Activated CD8-positive, alpha-beta memory T cell treated with anti-CD3 and anti-CD28 coated beads, Interleukin-2, amount 10 ng/mL, durations not matched to agents 7 days and 5 days (primary cell): ENCODE measurements at regions of chr1 and their contacts with region 1.

Region 1: DNA sequence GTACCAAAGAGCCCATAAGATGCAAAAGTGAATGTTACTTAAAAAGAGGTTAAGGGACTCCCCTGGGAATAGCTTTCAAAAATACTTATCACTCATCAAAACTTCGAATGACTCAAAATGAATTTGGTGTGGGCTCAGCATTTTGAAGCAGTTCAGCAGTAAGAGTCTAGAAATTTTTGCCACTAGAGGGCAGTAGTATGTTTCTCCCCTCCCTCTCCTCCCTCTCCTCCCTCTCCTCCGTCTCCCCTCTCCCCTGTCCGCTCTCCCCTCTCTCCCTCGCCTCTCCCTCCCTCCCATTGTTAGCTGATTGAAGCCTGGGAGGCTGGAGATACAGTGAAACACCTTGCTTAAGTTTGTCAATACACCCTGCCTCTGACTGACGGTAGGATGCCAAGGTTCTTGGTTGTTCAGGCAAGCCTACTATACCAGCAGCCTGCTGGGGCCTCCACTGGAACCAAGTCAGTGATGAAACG is 70.8 kb upstream of the TENT5C start:
- DNase-seq: peak; percentile 55
- ATAC-seq: peak; percentile 92
- H3K4me3 Mint-ChIP-seq: no peak overlapping the region
- H3K27ac Mint-ChIP-seq: no peak overlapping the region
- H3K4me1 Mint-ChIP-seq: peaks cover 5% of the 10 kb centered on the region
- H3K27me3 Mint-ChIP-seq: no peaks in the 10 kb centered on the region

Region 2: DNA sequence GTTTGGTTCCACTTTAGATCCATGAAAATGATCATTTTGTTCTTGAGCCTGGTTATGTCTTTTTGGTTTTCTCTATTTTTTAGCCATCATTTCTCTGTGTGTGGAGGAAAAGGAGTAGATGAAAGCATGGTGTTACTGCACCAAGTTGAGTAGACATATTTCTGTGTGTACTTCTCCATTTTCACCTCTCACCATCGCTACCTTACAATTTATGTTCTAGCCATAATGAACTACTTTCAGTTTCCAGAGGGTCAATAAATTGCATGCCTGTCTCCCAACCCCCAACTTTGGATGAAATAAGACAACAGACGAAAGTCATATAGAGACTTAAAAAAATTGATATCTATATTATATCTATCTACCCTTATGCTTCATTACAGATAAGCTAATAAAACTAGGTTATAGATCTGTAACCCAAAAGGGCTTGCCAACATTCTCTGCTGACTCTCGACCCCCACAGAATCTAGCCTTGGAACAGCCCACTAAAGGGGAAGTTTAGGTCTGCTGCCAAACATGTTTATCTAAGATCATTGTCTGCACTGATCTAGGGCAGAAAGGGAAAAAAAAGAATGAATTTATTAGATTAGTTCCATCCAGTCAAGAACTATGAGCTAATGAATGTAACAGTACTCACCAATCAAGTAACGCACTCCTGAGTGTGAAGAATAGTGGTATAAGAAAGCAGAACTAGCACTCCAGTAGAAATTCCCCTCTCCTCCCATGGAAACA is 175.3 kb before region 1 on chr1:
- CTCF ChIA-PET with region 1: no interaction called
- DNase-seq: no peak
- ATAC-seq: no peak
- H3K4me3 Mint-ChIP-seq: peak overlapping the region; percentile 27
- H3K27ac Mint-ChIP-seq: no peak overlapping the region
- H3K4me1 Mint-ChIP-seq: peaks cover 33% of the 10 kb centered on the region
- H3K27me3 Mint-ChIP-seq: no peaks in the 10 kb centered on the region

Region 3: DNA sequence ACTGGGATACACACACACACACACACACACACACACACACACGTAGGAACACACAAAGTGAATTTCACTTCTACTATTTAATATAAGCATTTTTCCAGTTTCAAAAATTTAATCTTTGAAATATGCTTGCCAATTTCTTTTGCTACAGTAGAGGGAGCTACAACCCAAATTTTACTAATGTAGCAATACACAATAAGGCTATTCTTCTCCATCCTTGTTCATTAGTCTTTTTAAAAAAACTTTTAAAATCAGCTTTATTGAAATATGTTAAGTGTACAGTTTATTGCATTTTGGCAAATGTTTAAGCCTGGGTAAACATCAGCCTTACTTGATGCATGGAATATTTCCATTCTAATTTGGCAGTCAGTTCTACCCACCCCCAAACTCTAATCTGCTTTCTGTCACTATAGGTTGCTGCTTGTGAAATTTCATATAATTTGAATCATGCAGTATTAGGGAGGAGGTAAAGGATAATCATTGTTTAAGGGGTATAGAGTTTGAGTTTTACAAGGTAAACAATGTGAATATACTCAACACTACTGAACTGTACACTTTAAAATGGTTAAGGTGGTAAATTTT is 22.2 kb before region 1 on chr1:
- CTCF ChIA-PET with region 1: interaction called, 10 read pairs
- DNase-seq: no peak
- ATAC-seq: peak; percentile 55
- H3K4me3 Mint-ChIP-seq: no peak overlapping the region
- H3K27ac Mint-ChIP-seq: no peak overlapping the region
- H3K4me1 Mint-ChIP-seq: peaks cover 4% of the 10 kb centered on the region
- H3K27me3 Mint-ChIP-seq: no peaks in the 10 kb centered on the region

Region 4: DNA sequence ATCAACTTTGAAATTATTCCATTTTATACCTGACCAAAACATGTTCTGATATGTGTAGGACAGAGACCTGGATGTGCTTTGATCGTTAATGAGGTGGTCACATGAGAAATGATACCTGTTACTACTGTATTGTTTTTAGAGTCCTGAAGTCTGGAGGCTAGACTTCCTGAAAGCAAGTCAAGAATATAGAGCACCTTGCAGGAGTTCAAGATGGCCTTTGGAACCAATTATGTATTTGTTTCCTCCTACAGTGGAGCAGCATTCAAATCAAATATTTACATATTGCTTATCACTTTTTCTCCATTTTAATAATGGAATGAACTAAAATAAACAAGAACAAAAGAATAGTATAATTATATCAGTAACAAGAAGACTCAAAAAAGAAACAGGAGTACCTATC is 11.9 kb before region 1 on chr1:
- CTCF ChIA-PET with region 1: interaction called, 13 read pairs
- DNase-seq: no peak
- ATAC-seq: no peak
- H3K4me3 Mint-ChIP-seq: no peak overlapping the region
- H3K27ac Mint-ChIP-seq: no peak overlapping the region
- H3K4me1 Mint-ChIP-seq: peaks cover 3% of the 10 kb centered on the region
- H3K27me3 Mint-ChIP-seq: no peaks in the 10 kb centered on the region

Region 5: GRCh38 chr1:117586747-117587498 is 51.9 kb after region 1 on chr1:
- CTCF ChIA-PET with region 1: no interaction called
- DNase-seq: no peak
- ATAC-seq: no peak
- H3K4me3 Mint-ChIP-seq: no peak overlapping the region
- H3K27ac Mint-ChIP-seq: no peak overlapping the region
- H3K4me1 Mint-ChIP-seq: peaks cover 11% of the 10 kb centered on the region
- H3K27me3 Mint-ChIP-seq: peaks cover 2% of the 10 kb centered on the region

Region 6: GRCh38 chr1:117605774-117606648 is 71.0 kb after region 1 on chr1 and contains the start of gene TENT5C:
- CTCF ChIA-PET with region 1: interaction called, 13 read pairs
- DNase-seq: peak; percentile 99
- ATAC-seq: peak; percentile 85
- H3K4me3 Mint-ChIP-seq: peak within 1 kb of the TSS; percentile 100
- H3K27ac Mint-ChIP-seq: peak within 1 kb of the TSS; percentile 98
- H3K4me1 Mint-ChIP-seq: peaks cover 45% of the 10 kb centered on the region
- H3K27me3 Mint-ChIP-seq: peaks cover 18% of the 10 kb centered on the region
- total RNA-seq, gene TENT5C: 41.6 to 50.3 TPM

Region 7: GRCh38 chr1:117612517-117613248 is 77.7 kb after region 1 on chr1:
- CTCF ChIA-PET with region 1: interaction called, 13 read pairs
- DNase-seq: no peak
- ATAC-seq: no peak
- H3K4me3 Mint-ChIP-seq: no peak overlapping the region
- H3K27ac Mint-ChIP-seq: no peak overlapping the region
- H3K4me1 Mint-ChIP-seq: peaks cover 92% of the 10 kb centered on the region
- H3K27me3 Mint-ChIP-seq: no peaks in the 10 kb centered on the region

Region 8: DNA sequence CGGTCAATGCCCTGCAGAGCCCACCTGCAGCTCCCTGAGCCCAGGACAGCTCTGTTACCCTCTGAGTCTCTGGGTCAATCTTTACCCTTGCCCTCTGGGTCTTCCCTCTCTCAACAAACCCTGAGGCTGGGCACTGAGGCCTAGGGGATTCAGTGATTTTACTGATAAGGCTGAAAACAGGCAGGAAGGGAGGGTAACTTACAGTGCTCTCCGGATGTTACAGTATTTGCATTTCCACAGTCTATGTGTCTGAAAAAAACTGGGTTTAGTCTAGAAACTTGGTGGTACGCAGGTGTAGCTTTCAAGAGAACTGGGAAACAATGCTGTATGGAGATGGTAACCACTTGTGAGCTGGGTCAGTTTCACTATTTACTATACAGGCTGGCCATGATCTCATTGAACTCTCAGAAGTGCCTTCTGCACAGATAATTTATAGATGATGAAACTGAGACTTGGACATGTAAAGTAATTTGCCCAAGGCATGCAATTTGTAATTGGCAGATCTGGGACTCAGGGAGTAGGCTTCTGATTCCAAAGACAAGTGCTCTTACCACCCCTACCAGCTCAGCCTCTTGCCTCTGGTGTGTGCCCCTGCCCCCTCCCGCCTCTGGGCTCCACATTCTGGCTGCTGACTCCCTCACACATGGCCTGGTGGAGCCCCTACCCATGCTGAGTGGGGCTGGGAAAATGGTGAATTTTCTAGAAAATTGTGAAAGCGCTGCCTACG is 119.6 kb after region 1 on chr1:
- CTCF ChIA-PET with region 1: interaction called, 12 read pairs
- DNase-seq: no peak
- ATAC-seq: peak; percentile 10
- H3K4me3 Mint-ChIP-seq: peak overlapping the region; percentile 22
- H3K27ac Mint-ChIP-seq: peak overlapping the region; percentile 95
- H3K4me1 Mint-ChIP-seq: peaks cover 88% of the 10 kb centered on the region
- H3K27me3 Mint-ChIP-seq: no peaks in the 10 kb centered on the region

Region 9: DNA sequence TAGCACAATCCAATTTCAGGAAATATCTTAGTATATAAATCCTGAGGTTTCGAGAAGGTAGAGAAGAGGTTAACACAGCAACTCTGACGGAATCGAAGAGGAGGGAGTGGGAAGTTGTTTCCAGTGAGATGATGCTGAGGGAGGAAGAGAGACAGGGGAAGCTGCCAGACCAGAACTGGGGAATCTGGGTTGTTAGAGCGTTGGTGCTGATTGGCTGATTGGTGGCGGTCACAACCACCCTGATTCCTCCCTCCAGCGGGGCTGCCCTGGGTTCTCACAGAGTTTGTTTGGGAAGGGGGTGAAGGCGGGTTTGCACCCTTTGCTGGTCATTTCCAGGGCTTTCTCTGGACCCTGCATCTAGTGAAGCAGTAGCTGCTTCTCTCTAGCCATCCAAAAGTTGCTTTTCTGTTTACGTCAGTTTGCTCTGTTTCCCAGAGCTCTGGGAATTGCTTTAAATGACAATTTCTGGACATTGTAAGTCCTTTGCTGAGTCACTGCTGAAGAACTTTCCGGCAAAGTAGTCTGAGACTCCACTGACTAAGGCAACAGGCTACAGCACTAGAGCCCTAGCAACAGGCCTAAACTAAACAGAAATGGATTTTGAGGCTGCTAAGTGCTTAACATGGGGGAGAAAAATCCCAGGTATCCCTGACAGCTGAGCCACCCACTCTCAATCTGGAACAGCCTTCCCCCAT is 160.9 kb after region 1 on chr1:
- CTCF ChIA-PET with region 1: interaction called, 13 read pairs
- DNase-seq: no peak
- ATAC-seq: no peak
- H3K4me3 Mint-ChIP-seq: no peak overlapping the region
- H3K27ac Mint-ChIP-seq: no peak overlapping the region
- H3K4me1 Mint-ChIP-seq: peaks cover 33% of the 10 kb centered on the region
- H3K27me3 Mint-ChIP-seq: peaks cover 9% of the 10 kb centered on the region